ENCODE measurements at regions of chr6 and their contacts with region 1.

Region 1: GRCh38 chr6:3390698-3391097 is 66.2 kb downstream of the SLC22A23 start:
- DNase-seq: peak; percentile 96
- H3K4me3 ChIP-seq: no peak overlapping the region
- H3K27ac ChIP-seq: peak overlapping the region; percentile 94
- H3K4me1 ChIP-seq: peaks cover 59% of the 10 kb centered on the region
- H3K27me3 ChIP-seq: no peaks in the 10 kb centered on the region
- CTCF ChIP-seq: no peak

Region 2: GRCh38 chr6:3403238-3404173 is 12.8 kb after region 1 on chr6:
- CTCF ChIA-PET with region 1: no interaction called
- dilution Hi-C with region 1: no loop called
- in situ Hi-C with region 1: no loop called
- intact Hi-C with region 1: loop called (anchors 1 kb)
- DNase-seq: peak; percentile 81
- H3K4me3 ChIP-seq: no peak overlapping the region
- H3K27ac ChIP-seq: peak overlapping the region; percentile 85
- H3K4me1 ChIP-seq: peaks cover 33% of the 10 kb centered on the region
- H3K27me3 ChIP-seq: no peaks in the 10 kb centered on the region
- CTCF ChIP-seq: no peak

Region 3: DNA sequence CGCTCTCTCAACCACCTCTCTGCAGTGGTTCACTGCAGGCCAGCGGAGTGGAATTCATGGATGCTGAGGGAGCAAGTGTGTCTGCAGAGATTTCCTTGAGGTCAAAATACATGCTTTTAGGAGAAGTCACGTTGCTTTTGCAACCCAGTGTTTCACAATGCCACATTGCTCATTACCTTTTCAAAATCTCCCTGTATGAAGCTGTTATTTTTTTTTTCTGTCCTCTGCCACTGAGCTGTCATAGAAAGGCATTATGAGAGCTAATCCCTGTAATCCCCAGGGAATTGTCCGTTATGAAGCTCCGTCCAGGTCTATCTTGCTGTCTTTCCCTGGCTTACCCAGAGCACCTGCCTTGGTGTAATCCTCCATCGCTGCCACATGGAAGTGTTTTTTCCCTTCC is 126.7 kb after region 1 on chr6:
- CTCF ChIA-PET with region 1: no interaction called
- dilution Hi-C with region 1: no loop called
- in situ Hi-C with region 1: no loop called
- intact Hi-C with region 1: no loop called
- DNase-seq: peak; percentile 93
- H3K4me3 ChIP-seq: no peak overlapping the region
- H3K27ac ChIP-seq: peak overlapping the region; percentile 79
- H3K4me1 ChIP-seq: peaks cover 26% of the 10 kb centered on the region
- H3K27me3 ChIP-seq: no peaks in the 10 kb centered on the region
- CTCF ChIP-seq: no peak

Region 4: DNA sequence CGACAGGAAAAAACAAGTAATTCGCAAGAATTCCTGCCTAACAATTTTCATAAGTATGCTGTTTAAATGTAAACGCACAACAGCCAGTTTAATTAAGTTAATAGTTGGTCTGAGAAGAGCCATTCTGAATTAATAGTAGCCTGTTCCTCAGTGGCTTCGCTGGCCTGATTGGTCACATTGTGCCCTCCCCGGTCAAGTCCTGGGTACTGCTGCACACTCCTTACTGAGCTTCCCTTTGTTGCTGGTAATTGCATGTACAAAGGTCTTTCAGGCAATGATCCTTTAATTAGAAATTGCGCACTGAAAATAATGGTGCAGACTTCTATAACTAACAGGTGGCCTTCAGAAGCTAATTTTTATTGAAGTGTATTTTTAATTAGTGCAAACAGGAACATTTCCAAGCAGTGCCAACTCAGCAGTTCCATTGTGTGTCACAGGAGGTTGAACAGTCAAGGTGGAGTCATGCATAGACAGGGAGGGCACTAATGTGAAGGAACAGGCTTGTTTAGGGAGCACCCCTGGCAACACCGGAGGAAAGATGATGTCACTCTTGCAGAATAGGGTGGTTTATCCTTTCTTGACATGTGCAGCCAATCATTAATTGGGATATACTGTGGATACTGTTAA is 158.7 kb after region 1 on chr6:
- CTCF ChIA-PET with region 1: no interaction called
- dilution Hi-C with region 1: no loop called
- in situ Hi-C with region 1: no loop called
- intact Hi-C with region 1: no loop called
- DNase-seq: peak; percentile 83
- H3K4me3 ChIP-seq: no peak overlapping the region
- H3K27ac ChIP-seq: no peak overlapping the region
- H3K4me1 ChIP-seq: peaks cover 5% of the 10 kb centered on the region
- H3K27me3 ChIP-seq: no peaks in the 10 kb centered on the region
- CTCF ChIP-seq: no peak

Measured in mammary epithelial cell (primary cell).